Dendritic cell treated with granulocyte-macrophage colony-stimulating factor and Interleukin-4, amounts not matched to agents 40 ng/mL and 50 ng/mL, for 4 days (primary cell): ENCODE measurements at regions of chr5 and their contacts with region 1.

Region 1: GRCh38 chr5:58751222-58751837 is 168.5 kb downstream of the RAB3C start:
- H3K4me3 Mint-ChIP-seq: no peak overlapping the region
- H3K27ac Mint-ChIP-seq: no peak overlapping the region
- H3K4me1 Mint-ChIP-seq: peaks cover 10% of the 10 kb centered on the region
- H3K27me3 Mint-ChIP-seq: no peaks in the 10 kb centered on the region

Region 2: GRCh38 chr5:58486290-58486689 is 265.0 kb before region 1 on chr5:
- intact Hi-C with region 1: loop called (anchors 5 kb)
- H3K4me3 Mint-ChIP-seq: no peak overlapping the region
- H3K27ac Mint-ChIP-seq: no peak overlapping the region
- H3K4me1 Mint-ChIP-seq: peaks cover 26% of the 10 kb centered on the region
- H3K27me3 Mint-ChIP-seq: no peaks in the 10 kb centered on the region

Region 3: DNA sequence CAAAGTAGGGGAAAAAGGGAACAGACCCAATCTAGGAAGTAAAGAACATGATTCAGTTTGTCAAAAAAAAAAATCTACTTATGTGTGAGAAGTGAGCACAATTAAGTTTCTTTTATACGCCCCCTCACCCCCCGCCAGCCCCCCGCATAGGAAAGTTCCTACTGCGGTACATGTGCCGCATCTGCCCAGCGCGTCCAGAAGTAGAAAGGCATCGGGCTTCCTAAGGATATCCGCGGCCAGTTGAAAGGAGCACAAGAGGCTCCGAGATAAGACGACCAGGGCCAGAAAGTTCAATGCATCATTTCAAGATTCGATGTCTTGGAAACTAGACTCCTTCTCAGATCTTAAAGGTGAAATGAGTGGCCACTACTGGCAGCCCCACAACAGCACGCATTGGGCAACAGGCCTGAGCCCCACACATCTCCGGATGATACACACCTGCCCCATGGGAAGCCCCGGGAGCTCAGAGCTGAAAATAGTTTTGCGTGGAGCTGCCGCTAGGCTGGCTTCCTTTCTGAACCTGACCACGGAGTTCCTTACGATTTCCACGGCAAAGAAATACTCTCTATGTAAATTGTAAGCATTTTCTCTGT is 35.5 kb after region 1 on chr5:
- intact Hi-C with region 1: no loop called
- H3K4me3 Mint-ChIP-seq: peak overlapping the region; percentile 40
- H3K27ac Mint-ChIP-seq: no peak overlapping the region
- H3K4me1 Mint-ChIP-seq: peaks cover 11% of the 10 kb centered on the region
- H3K27me3 Mint-ChIP-seq: peaks cover 5% of the 10 kb centered on the region